ENCODE measurements at regions of chr9 and their contacts with region 1.

Region 1: GRCh38 chr9:128635283-128636023 is 21.2 kb downstream of the DYNC2I2 start:
- DNase-seq: peak; percentile 97
- H3K4me3 Mint-ChIP-seq: peak overlapping the region; percentile 69
- H3K27ac Mint-ChIP-seq: peak overlapping the region; percentile 94
- H3K4me1 Mint-ChIP-seq: peaks cover 25% of the 10 kb centered on the region
- H3K27me3 Mint-ChIP-seq: no peaks in the 10 kb centered on the region
- CTCF ChIP-seq: peak; percentile 90

Region 2: GRCh38 chr9:128361986-128362646 is 273.3 kb before region 1 on chr9:
- CTCF ChIA-PET with region 1: interaction called, 15 read pairs
- POLR2A ChIA-PET with region 1: interaction called, 9 read pairs
- intact Hi-C with region 1: loop called (anchors 1 kb)
- DNase-seq: peak; percentile 86
- H3K4me3 Mint-ChIP-seq: peak overlapping the region; percentile 82
- H3K27ac Mint-ChIP-seq: no peak overlapping the region
- H3K4me1 Mint-ChIP-seq: peaks cover 6% of the 10 kb centered on the region
- H3K27me3 Mint-ChIP-seq: no peaks in the 10 kb centered on the region
- CTCF ChIP-seq: peak; percentile 87

Region 3: GRCh38 chr9:128455849-128456612 is 179.4 kb before region 1 on chr9 and contains the start of gene ODF2:
- CTCF ChIA-PET with region 1: interaction called, 3 read pairs
- POLR2A ChIA-PET with region 1: interaction called, 3 read pairs
- intact Hi-C with region 1: loop called (anchors 5 kb)
- DNase-seq: peak; percentile 95
- H3K4me3 Mint-ChIP-seq: peak within 1 kb of the TSS; percentile 98
- H3K27ac Mint-ChIP-seq: peak within 1 kb of the TSS; percentile 96
- H3K4me1 Mint-ChIP-seq: no peaks in the 10 kb centered on the region
- H3K27me3 Mint-ChIP-seq: no peaks in the 10 kb centered on the region
- CTCF ChIP-seq: no peak
- total RNA-seq, gene ODF2: 34.4 and 37.3 TPM in 2 replicates

Region 4: DNA sequence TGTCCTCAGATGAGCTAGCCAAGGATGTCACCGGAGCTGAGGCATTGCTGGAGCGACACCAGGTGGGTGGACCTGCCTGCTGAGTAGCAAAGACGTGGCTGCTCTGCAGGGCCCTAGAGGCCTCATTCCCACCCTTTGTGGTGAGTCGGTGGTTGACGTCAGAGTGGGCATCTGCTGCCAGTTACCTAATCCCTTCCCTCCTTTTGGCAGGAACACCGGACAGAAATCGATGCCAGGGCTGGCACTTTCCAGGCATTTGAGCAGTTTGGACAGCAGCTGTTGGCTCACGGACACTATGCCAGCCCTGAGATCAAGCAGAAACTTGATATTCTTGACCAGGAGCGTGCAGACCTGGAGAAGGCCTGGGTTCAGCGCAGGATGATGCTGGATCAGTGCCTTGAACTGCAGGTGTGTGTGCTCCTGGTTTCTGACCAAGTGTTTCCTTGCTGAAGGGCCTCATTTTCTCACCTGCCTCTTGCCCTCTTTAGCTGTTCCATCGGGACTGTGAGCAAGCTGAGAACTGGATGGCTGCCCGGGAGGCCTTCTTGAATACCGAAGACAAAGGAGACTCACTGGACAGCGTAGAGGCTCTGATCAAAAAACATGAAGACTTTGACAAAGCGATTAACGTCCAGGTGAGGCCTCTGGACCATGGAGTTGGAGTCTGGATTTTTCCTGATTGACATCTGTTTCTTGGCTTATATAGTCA is 27.7 kb before region 1 on chr9:
- CTCF ChIA-PET with region 1: interaction called, 12 read pairs
- POLR2A ChIA-PET with region 1: interaction called, 35 read pairs
- intact Hi-C with region 1: no loop called
- DNase-seq: peak; percentile 99
- H3K4me3 Mint-ChIP-seq: no peak overlapping the region
- H3K27ac Mint-ChIP-seq: peak overlapping the region; percentile 87
- H3K4me1 Mint-ChIP-seq: peaks cover 22% of the 10 kb centered on the region
- H3K27me3 Mint-ChIP-seq: no peaks in the 10 kb centered on the region
- CTCF ChIP-seq: no peak

Region 5: DNA sequence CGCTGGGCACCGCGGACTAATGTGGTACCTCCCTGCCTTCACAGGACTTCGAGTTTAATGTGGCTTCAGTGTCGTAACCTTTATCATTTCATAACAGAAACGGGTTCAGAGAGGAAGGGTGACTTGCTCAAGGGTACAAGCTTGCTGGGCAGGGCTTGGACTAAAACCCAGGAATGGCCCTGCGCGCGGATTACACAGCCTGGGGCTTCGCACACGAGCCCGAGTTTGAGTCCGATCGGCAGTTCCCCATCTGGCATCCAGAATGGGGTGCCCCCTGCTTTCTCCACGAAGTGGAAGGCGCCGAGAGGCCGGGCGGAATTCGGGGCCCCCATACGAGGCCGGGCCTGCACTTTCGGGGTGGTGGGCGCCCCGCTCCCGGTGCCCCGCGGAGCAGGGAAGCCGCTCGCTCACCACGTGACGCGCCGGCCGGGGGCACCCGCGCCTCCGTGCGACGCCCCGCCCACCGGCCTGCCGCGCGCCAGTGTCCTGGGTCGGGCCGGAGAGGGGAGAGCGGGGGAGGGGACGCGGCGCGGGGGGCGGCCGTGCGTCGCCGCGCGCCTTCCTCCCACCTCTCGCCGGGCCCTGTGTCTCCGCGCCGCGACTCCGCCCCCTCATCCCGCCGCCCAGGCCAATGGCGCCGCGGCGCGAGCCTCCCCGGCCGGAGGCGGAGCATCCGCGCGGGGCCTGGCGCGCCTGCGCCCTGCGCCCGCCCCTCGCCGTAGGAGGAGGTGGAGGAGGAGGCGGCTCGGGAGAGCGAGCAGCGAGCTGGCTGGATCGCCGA is 53.2 kb after region 1 on chr9 and contains the start of gene SET:
- CTCF ChIA-PET with region 1: interaction called, 17 read pairs
- POLR2A ChIA-PET with region 1: interaction called, 64 read pairs
- intact Hi-C with region 1: loop called (anchors 2 kb)
- DNase-seq: peak; percentile 92
- H3K4me3 Mint-ChIP-seq: peak within 1 kb of the TSS; percentile 90
- H3K27ac Mint-ChIP-seq: peak within 1 kb of the TSS; percentile 67
- H3K4me1 Mint-ChIP-seq: peaks cover 40% of the 10 kb centered on the region
- H3K27me3 Mint-ChIP-seq: no peaks in the 10 kb centered on the region
- CTCF ChIP-seq: no peak
- total RNA-seq, gene SET: 512 and 563 TPM in 2 replicates

Region 6: GRCh38 chr9:128771745-128772519 is 136.5 kb after region 1 on chr9 and contains the start of gene ZER1:
- CTCF ChIA-PET with region 1: no interaction called
- POLR2A ChIA-PET with region 1: interaction called, 18 read pairs
- intact Hi-C with region 1: no loop called
- DNase-seq: peak; percentile 85
- H3K4me3 Mint-ChIP-seq: peak within 1 kb of the TSS; percentile 96
- H3K27ac Mint-ChIP-seq: peak within 1 kb of the TSS; percentile 92
- H3K4me1 Mint-ChIP-seq: peaks cover 11% of the 10 kb centered on the region
- H3K27me3 Mint-ChIP-seq: no peaks in the 10 kb centered on the region
- CTCF ChIP-seq: no peak
- total RNA-seq, gene ZER1: 19.5 and 26.6 TPM in 2 replicates

Region 7: DNA sequence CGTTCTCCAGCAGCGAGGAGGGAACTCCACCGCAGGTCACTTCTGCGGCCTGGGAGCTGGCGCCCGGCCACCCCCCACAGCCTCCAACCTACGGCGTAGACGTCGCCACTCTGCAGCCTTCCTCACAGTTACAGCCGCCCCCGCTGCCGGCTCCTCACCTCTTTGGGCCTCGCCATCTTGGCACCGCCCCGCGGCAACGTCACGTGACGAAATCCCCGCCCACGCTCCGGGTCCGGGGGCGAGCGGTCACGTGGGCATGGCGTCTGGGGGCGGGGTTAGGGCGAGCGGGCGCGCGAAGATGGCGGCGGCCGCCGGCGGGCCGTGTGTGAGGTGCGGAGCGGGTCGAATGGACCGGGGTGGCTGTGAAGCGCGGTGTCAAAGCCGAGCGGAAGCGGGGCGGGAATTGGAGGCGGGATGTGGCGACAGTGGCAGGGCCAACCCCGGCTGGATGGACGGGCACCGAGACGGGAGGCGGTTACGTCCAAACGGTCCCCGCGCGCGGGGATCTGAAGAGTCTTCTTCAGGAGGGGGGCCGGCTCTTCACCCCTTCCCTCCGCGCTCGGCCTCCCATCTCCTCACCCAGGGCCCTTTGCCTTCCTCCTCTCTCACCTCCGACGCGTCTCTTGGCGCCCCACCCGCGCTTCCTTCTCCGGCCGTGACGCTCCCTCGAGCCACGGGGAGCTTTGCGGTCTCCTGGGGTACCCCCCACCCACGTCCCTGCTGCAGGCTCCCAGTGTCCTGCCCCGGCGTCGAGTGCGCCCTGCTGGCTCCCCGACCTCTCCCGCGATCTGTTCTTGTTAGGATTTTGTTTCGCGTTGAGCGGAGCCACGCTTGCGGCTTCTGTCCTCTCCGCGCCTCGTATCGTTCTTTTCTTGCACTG is 312.2 kb after region 1 on chr9 and contains the starts of genes DOLK and NUP188:
- CTCF ChIA-PET with region 1: no interaction called
- POLR2A ChIA-PET with region 1: no interaction called
- intact Hi-C with region 1: no loop called
- DNase-seq: peak; percentile 94
- H3K4me3 Mint-ChIP-seq: peak within 1 kb of the TSS; percentile 83
- H3K27ac Mint-ChIP-seq: peak within 1 kb of the TSS; percentile 90
- H3K4me1 Mint-ChIP-seq: peaks cover 17% of the 10 kb centered on the region
- H3K27me3 Mint-ChIP-seq: no peaks in the 10 kb centered on the region
- CTCF ChIP-seq: no peak
- total RNA-seq, gene DOLK: 12.0 and 16.9 TPM in 2 replicates
- total RNA-seq, gene NUP188: 47.3 and 54.9 TPM in 2 replicates